A549 (cell line): ENCODE measurements at regions of chr7 and their contacts with region 1.

Region 1: GRCh38 chr7:108525985-108526767 is at the start of gene PNPLA8:
- DNase-seq: peak; percentile 96 to 99
- ATAC-seq: peak; percentile 90 to 94
- H3K4me3 ChIP-seq: peak within 1 kb of the TSS; percentile 78
- H3K27ac ChIP-seq: peak within 1 kb of the TSS; percentile 81 to 83
- H3K4me1 ChIP-seq: peaks cover 10% of the 10 kb centered on the region
- CTCF ChIP-seq: no peak
- EP300 ChIP-seq: no peak
- POLR2A ChIP-seq: peak; percentile 69
- RAD21 ChIP-seq: no peak
- polyA plus RNA-seq, gene PNPLA8: 22.6 and 29.6 TPM in 2 replicates

Region 2: GRCh38 chr7:108368466-108368865 is 157.7 kb before region 1 on chr7:
- CTCF ChIA-PET with region 1: no interaction called
- POLR2A ChIA-PET with region 1: no interaction called
- DNase-seq: peak in 1 of 2 experiments; percentile 16
- ATAC-seq: peak in 1 of 2 experiments; percentile 35; a peak in 2 of 6 replicates
- H3K4me3 ChIP-seq: no peak overlapping the region
- H3K27ac ChIP-seq: peak overlapping the region; percentile 26 to 59
- H3K4me1 ChIP-seq: peaks cover 39% of the 10 kb centered on the region
- CTCF ChIP-seq: no peak
- EP300 ChIP-seq: no peak
- POLR2A ChIP-seq: no peak
- RAD21 ChIP-seq: no peak

Region 3: DNA sequence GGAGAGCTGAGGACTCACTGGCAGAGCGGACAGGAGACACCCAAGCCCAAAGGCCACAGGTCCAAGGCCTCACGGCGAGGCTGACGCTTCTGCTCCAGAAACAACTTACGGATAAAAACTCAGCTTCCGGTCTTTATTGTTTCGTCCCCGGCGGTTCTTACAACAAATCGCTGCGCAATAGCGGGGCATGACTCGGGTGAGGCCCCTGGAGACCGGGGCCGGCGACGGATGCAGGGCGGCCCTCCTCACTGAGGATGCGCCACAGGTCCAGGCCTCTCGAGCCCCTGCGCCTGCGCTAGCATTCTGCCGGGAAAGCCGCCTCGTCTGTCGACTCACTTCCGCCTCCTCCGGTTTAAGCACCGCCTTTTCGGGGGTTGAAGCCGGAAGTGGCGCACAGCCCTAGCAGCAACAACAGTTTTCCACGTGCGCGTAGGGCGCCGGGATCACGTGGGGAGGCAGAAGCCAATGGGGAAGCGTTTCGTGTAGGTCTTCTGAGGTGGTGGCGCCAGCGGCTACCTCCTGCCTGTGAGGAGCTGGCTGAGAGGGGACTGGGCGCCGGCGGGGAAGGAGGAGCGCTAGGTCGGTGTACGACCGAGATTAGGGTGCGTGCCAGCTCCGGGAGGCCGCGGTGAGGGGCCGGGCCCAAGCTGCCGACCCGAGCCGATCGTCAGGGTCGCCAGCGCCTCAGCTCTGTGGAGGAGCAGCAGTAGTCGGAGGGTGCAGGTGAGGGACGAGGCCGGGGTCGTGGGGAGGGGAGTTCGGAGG is 43.4 kb after region 1 on chr7 and contains the starts of genes DNAJB9 and THAP5:
- CTCF ChIA-PET with region 1: no interaction called
- POLR2A ChIA-PET with region 1: interaction called, 18 read pairs
- DNase-seq: peak; percentile 98 to 99
- ATAC-seq: peak; percentile 97 to 99
- H3K4me3 ChIP-seq: peak within 1 kb of the TSS; percentile 70
- H3K27ac ChIP-seq: peak within 1 kb of the TSS; percentile 93 to 96
- H3K4me1 ChIP-seq: peaks cover 29% of the 10 kb centered on the region; the same call in 2 of the 3 replicates
- CTCF ChIP-seq: no peak
- EP300 ChIP-seq: no peak
- POLR2A ChIP-seq: peak; percentile 78
- RAD21 ChIP-seq: no peak
- polyA plus RNA-seq, gene DNAJB9: 14.8 and 15.8 TPM in 2 replicates
- polyA plus RNA-seq, gene THAP5: 21.7 and 27.4 TPM in 2 replicates

Region 4: DNA sequence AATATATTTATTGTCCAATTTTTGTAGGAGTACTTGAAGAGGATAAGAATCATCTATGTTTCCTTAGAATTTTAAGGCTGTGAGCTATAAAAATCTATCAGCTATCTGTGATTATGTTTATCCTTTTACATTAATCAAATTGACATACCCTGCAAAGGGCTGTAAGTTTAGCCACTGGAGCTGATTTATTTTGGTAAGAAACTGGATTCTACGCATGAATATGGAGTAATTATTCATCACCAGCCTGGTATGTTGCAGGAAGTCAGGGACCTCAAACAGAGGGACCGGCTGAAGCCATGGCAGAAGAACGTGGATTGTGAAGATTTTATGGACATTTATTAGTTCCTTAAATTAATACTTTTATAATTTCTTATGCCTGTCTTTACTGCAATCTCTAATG is 740.4 kb after region 1 on chr7:
- CTCF ChIA-PET with region 1: no interaction called
- POLR2A ChIA-PET with region 1: no interaction called
- DNase-seq: no peak
- ATAC-seq: no peak
- H3K4me3 ChIP-seq: no peak overlapping the region
- H3K27ac ChIP-seq: no peak overlapping the region
- H3K4me1 ChIP-seq: no peaks in the 10 kb centered on the region
- CTCF ChIP-seq: no peak
- EP300 ChIP-seq: no peak
- POLR2A ChIP-seq: no peak
- RAD21 ChIP-seq: no peak